AG04449 (cell line): ENCODE measurements at regions of chr1 and their contacts with region 1.

Region 1: GRCh38 chr1:43763497-43763973 is 56.2 kb downstream of the ST3GAL3 start:
- DNase-seq: peak; percentile 73
- H3K4me3 ChIP-seq: no peak overlapping the region
- CTCF ChIP-seq: peak; percentile 79

Region 2: GRCh38 chr1:43529206-43529731 is 234.3 kb before region 1 on chr1:
- CTCF ChIA-PET with region 1: interaction called, 16 read pairs
- POLR2A ChIA-PET with region 1: no interaction called
- DNase-seq: peak; percentile 53
- H3K4me3 ChIP-seq: no peak overlapping the region
- CTCF ChIP-seq: peak; percentile 91

Region 3: GRCh38 chr1:43776043-43776761 is 12.7 kb after region 1 on chr1:
- CTCF ChIA-PET with region 1: interaction called, 42 read pairs
- POLR2A ChIA-PET with region 1: no interaction called
- DNase-seq: no peak
- H3K4me3 ChIP-seq: no peak overlapping the region
- CTCF ChIP-seq: peak; percentile 9

Region 4: DNA sequence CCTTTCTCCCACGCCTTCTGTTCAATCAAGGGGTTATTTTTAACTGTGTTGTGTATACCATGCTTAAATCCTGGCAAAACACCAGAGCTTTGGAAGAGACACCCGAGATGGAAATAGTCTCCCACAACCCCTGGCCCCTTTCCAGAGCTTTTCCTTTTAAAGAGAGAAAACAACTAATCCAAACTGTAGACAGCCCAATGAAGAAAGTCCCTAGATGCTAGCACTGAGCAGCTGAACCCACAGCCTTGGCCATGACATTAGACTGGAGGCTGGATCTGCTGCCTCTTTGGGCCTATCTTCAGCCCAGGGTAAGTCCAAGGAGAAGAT is 105.2 kb after region 1 on chr1:
- CTCF ChIA-PET with region 1: interaction called, 12 read pairs
- POLR2A ChIA-PET with region 1: no interaction called
- DNase-seq: peak; percentile 37
- H3K4me3 ChIP-seq: no peak overlapping the region
- CTCF ChIP-seq: no peak

Region 5: GRCh38 chr1:43946236-43947060 is 182.9 kb after region 1 on chr1 and contains the start of gene IPO13:
- CTCF ChIA-PET with region 1: interaction called, 1,004 read pairs
- POLR2A ChIA-PET with region 1: no interaction called
- DNase-seq: peak; percentile 38
- H3K4me3 ChIP-seq: peak within 1 kb of the TSS; percentile 86
- CTCF ChIP-seq: peak; percentile 67

Region 6: GRCh38 chr1:43991476-43992231 is 228.1 kb after region 1 on chr1 and contains the start of gene CCDC24:
- CTCF ChIA-PET with region 1: interaction called, 26 read pairs
- POLR2A ChIA-PET with region 1: interaction called, 4 read pairs
- DNase-seq: no peak
- H3K4me3 ChIP-seq: peak within 1 kb of the TSS; percentile 79
- CTCF ChIP-seq: peak; percentile 3

Region 7: DNA sequence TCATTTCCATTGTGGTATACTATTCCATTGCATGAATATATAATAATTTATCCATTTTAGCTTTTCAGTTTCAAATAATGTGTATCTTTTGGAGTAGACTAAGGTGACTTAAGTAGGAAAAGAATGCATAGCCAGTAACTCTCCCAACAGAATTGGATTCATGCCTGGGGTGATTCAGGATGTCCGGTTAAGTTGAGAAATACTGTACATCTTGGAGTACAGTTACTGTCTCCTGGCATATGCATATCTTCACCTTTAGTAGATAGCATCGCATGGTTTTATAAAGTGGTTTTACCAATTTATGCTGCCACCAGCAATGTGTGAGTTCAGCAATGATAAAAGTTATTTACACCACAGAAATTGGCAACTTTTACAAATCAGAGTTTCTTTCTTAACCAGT is 286.3 kb after region 1 on chr1:
- CTCF ChIA-PET with region 1: interaction called, 56 read pairs
- POLR2A ChIA-PET with region 1: no interaction called
- DNase-seq: peak; percentile 91
- H3K4me3 ChIP-seq: no peak overlapping the region
- CTCF ChIP-seq: no peak